Heart right ventricle (tissue), 16 donors: ENCODE measurements at regions of chr3 and their contacts with region 1.

Region 1: DNA sequence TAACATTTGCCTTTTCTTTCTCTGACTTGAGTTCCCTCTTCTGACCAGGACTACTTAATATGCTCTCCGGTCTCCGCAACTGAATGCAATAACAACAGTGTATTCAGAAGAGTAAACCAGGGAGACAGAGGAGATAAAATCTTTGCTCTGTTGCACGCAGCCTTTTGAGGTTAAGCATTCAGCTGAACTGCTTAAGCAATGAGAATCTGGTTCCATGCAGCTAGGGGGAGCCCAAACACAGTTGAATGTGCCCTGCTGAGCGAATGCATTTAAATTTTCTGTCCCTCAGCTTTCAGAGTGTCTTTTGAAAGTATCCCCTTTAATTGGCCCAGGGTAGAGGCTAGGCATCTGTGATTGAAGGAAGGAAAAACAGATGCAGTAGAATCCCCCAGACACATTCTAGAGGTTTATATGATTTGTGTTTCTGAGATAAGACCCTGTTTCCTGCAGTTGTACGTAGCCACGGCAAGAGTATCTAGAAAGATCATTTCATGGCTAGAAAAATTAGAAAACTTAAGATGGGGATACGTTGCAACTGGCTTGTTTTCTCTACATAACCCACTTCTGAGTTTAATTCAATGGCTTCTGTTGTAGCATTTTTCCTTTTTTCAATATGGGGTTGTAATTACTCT is 309.6 kb downstream of the TUSC7 start:
- DNase-seq: peak; percentile 17 to 48
- ATAC-seq: peak in 7 of 8 donors; percentile 59 to 85 (median 69)
- H3K4me3 ChIP-seq: no peak overlapping the region
- H3K27ac ChIP-seq: no peak overlapping the region
- H3K4me1 ChIP-seq: peaks cover 0 to 5% (median 0%) of the 10 kb centered on the region in 9 donors
- H3K27me3 ChIP-seq: peaks cover 0 to 32% (median 0%) of the 10 kb centered on the region in 7 donors
- CTCF ChIP-seq: peak; percentile 21 to 80 (median 69)

Region 2: DNA sequence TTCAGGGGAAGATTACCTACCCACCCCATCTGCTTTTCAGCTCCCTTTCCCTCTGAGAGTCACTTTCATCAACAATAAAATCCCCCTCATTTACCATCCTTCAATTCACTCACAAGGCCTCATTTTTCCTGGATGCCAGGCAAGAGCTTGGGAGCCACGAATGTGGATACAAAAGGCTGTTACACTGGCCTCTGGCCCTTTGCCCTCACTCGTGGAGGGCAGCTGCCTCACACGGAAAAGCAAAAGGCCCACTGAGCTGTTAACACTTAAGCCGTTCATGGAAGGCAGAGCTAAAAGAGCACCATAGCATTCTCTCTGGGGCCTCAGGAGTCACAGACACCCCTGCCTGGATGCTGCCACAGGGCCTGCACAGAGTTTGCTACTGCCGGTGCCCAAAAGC is 412.0 kb before region 1 on chr3:
- intact Hi-C with region 1: no loop called
- DNase-seq: no peak
- ATAC-seq: no peak
- H3K4me3 ChIP-seq: no peak overlapping the region
- H3K27ac ChIP-seq: no peak overlapping the region
- H3K4me1 ChIP-seq: no peaks in the 10 kb centered on the region
- H3K27me3 ChIP-seq: peaks cover 0 to 4% (median 0%) of the 10 kb centered on the region in 7 donors
- CTCF ChIP-seq: no peak

Region 3: DNA sequence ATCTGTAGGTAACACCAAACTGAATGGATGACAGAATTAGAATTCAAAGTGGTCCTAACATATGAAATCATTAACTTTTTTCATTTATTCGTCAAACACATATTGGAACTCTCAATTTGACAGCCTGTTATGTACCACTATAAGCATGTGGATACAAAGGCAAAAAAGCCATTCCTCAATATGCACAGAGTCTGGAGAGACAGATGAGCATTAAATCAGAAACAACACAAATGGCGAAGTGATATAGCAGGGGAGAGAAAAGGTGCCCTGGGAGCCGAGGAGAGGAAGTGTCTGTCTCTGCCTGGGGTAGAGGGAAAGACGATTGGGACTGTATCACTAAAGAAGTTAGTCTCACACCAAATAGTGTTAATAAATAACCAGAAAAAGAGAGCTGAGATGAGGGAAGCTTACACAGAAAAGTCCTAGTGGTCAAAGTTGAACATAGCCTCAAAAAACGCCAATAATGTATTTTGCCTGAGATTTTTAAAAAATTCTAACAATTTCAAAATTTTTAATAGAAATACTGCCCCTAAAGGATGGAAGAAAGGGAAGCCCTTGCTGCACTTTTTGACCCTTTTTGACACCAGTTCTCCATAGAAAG is 107.8 kb after region 1 on chr3:
- intact Hi-C with region 1: no loop called
- DNase-seq: no peak
- ATAC-seq: no peak
- H3K4me3 ChIP-seq: no peak overlapping the region
- H3K27ac ChIP-seq: no peak overlapping the region
- H3K4me1 ChIP-seq: no peaks in the 10 kb centered on the region
- H3K27me3 ChIP-seq: no peaks in the 10 kb centered on the region
- CTCF ChIP-seq: no peak

Region 4: DNA sequence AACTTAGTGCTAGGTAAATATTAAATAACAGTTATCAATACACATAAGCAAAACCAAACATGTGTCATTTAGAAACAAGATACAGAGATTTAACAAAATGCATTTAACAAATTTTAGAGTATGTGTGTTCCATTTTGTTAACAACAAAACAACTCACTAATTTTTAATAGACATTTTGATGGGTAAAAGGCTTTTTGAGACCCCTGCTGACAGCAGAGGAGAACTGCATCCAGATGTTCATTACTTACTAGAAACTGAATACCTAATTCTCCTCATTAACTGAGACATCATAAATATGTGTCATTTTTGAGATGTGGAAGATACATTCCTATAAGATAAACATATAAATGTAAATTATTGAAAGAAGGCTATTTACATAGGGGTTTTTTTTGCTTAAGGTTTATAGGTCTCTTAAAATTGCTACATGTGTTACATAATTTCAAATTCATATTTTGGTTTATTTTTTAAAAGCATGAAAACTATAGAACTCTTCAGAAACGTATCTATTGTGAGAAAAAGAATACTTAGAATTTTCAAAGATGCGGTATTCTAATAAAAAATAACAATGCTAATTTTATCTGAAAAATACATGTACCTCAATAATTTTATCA is 700.2 kb after region 1 on chr3:
- intact Hi-C with region 1: loop called in 2 of 10 experiments (anchors 5 kb)
- DNase-seq: no peak
- ATAC-seq: no peak
- H3K4me3 ChIP-seq: no peak overlapping the region
- H3K27ac ChIP-seq: no peak overlapping the region
- H3K4me1 ChIP-seq: no peaks in the 10 kb centered on the region
- H3K27me3 ChIP-seq: peaks cover 0 to 6% (median 0%) of the 10 kb centered on the region in 7 donors
- CTCF ChIP-seq: peak; percentile 21 to 76 (median 65)